H1 (cell line): ENCODE measurements at regions of chr1 and their contacts with region 1.

Region 1: DNA sequence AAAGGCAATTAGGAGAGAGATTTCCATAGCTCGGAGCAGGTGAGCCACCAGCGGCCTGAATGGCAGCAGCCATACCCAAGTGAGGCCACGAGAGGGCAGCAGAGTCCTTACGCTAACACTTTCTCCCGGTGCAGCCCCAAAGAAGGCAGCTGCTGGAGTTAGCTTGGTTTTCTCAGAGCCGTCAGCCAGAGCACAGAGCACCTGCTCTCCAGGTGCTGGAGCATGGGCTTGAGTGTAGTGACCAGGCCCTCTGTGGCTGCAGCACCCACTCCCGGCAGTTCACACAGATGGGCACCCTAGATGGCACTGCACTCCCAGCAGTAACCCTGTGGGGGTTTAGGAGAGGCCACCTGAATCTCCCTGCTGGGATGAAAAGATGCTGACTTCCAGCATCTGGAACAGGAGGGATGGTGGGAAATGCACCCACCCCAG is 45.8 kb downstream of the TMCC2 start:
- DNase-seq: peak; percentile 83 to 94
- H3K4me3 ChIP-seq: no peak overlapping the region
- H3K27ac ChIP-seq: 0 out of 2 replicates have a peak overlapping the region, but pooled peaks have one; percentile 0
- H3K4me1 ChIP-seq: peaks cover 5 to 19% (median 11%) of the 10 kb centered on the region in 4 experiments; a peak in 6 of 7 replicates
- H3K27me3 ChIP-seq: no peaks in the 10 kb centered on the region
- CTCF ChIP-seq: peak in 2 of 3 experiments; percentile 96 to 100; a peak in 3 of 4 replicates
- EP300 ChIP-seq: no peak
- POLR2A ChIP-seq: no peak
- RAD21 ChIP-seq: peak; percentile 99 to 100

Region 2: DNA sequence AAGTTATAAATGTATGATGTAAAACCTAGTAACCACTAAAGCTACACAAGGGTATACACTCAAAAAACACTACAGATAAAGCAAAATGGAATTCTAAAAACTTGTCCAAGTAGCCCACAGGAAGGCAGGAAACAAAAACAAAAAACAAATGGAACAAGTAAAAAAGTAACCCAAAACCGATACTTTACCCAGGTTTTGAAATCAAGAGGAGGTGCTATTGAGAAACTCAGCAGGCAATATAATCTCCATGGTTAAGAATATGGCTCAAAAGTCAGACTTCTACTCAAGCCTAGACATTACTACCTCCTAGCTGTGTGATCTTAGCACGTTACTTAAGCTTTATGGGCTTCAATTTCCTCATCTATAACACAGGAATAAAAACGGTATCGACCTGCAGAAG is 165.1 kb before region 1 on chr1:
- CTCF ChIA-PET with region 1: no interaction called
- POLR2A ChIA-PET with region 1: no interaction called
- DNase-seq: no peak
- H3K4me3 ChIP-seq: no peak overlapping the region
- H3K27ac ChIP-seq: no peak overlapping the region
- H3K4me1 ChIP-seq: no peaks in the 10 kb centered on the region; a peak in 1 of 7 replicates
- H3K27me3 ChIP-seq: no peaks in the 10 kb centered on the region
- CTCF ChIP-seq: no peak
- EP300 ChIP-seq: no peak
- POLR2A ChIP-seq: no peak
- RAD21 ChIP-seq: no peak

Region 3: DNA sequence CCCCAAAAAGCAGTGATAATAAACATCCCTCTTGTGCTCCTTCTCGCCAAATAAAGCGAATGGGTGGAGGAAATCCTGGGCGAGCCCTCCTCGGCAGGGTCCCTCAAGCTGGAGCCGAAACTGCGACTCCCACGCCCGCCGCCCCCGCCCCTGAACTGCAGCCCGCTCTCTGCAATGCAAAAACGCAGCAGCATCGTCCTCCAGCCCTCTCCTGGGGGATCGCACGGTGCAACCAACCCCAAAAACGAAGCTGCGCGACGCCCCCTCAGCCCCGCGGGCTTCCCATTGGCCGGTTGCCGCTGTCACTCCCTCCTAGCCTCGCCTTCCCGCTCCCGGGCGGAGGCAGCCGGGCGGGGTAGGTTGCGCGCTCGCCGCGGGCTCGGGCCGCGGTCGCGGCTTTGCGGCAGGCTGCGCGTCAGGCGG is 46.0 kb before region 1 on chr1 and contains the start of gene TMCC2:
- CTCF ChIA-PET with region 1: interaction called, 1,035 read pairs
- POLR2A ChIA-PET with region 1: interaction called, 3 read pairs
- DNase-seq: peak; percentile 73 to 97
- H3K4me3 ChIP-seq: peak within 1 kb of the TSS; percentile 59 to 85 (median 73)
- H3K27ac ChIP-seq: no peak within 1 kb of the TSS
- H3K4me1 ChIP-seq: peaks cover 13 to 18% (median 16%) of the 10 kb centered on the region in 4 experiments; a peak in 6 of 7 replicates
- H3K27me3 ChIP-seq: peaks cover 0 to 6% (median 4%) of the 10 kb centered on the region in 4 experiments; a peak in 5 of 7 replicates
- CTCF ChIP-seq: no peak
- EP300 ChIP-seq: no peak
- POLR2A ChIP-seq: peak in 1 of 2 experiments; percentile 45; a peak in 1 of 3 replicates
- RAD21 ChIP-seq: no peak
- total RNA-seq, gene TMCC2: 6.7 and 7.2 TPM in 2 replicates

Region 4: DNA sequence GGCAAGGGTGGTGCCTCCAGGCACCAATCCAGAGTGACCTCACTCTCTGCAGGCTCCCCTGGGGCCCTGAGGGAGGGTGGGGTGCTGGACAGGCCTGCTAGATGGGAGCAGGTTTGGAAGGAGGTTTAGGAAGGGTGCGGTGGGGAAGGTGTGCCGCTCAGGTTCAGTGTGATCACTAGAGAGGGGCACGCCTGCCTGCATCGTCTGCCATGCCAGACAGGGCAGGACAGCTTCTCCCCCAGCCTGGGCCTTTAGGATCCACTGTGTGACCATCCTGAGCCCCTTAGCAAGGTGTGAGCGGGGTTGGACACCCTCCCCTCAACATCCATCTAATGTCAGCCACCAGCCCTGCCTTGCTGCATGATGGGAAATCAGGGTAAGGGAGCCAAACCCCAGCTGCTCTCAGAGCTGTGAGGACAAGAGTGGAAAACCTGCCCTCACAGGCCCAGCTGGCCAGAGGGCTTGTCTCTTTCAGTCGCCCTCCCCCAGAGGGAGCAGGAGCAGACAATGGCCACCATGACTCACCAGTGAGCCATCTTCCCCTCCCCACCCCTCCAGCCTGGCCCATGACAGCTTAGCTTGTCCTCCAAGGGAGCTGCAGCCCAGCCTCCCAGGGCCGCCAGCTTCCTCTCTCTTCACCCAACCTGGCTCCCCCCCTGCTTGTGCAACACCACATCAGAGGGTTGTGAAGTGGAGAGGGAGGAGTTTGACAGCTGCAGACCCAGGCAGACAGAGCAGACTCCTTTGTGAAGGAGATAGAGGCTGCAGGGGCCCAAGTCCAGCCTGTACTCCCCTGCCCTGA is 11.0 kb after region 1 on chr1:
- CTCF ChIA-PET with region 1: interaction called, 48 read pairs
- POLR2A ChIA-PET with region 1: interaction called, 7 read pairs
- DNase-seq: peak; percentile 73 to 87
- H3K4me3 ChIP-seq: no peak overlapping the region
- H3K27ac ChIP-seq: peak overlapping the region; percentile 56; the same call in 1 of the 2 replicates
- H3K4me1 ChIP-seq: peaks cover 9 to 26% (median 18%) of the 10 kb centered on the region in 4 experiments
- H3K27me3 ChIP-seq: no peaks in the 10 kb centered on the region; a peak in 1 of 7 replicates
- CTCF ChIP-seq: no peak
- EP300 ChIP-seq: no peak
- POLR2A ChIP-seq: peak in 1 of 2 experiments; percentile 62; a peak in 2 of 3 replicates
- RAD21 ChIP-seq: no peak; a peak in 2 of 4 replicates

Region 5: DNA sequence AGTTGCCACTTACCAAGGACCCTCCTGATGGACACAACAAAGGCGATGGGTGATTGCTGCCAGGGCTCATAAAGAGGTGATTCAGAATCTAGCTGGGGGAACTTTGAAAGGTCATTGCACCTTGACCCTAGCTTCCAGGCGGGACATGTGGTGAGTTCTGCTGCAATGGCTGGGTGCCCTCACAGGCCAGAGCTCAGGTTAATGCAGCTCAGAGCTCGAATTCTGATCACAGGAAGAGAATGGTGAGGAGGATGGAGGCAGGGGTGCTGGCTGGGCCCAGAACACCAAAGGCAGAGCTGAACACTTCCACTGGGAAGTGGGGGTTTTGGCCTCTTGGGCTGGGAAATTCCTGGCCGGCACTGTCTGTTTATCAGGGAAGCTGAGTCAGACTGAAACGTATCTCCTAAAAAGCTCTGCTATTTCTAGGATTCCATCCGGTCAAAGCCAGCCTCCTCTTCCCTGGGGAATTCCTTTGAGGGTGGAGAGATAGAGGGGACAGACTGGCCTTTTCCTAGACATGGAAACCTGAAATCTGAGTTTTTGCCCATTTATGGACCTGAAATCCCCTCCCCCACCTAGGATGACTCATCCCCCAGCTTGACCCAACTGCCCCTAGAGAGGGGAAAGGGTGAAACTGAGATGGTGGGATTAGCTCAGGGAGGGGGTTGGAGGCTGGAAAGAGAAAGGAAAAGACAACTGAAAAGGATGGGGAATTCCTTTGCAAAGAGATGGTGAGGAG is 20.8 kb after region 1 on chr1:
- CTCF ChIA-PET with region 1: interaction called, 2,424 read pairs
- POLR2A ChIA-PET with region 1: interaction called, 25 read pairs
- DNase-seq: peak; percentile 56 to 85
- H3K4me3 ChIP-seq: peak overlapping the region in 1 of 4 experiments; percentile 30; a peak in 2 of 8 replicates
- H3K27ac ChIP-seq: peak overlapping the region; percentile 97
- H3K4me1 ChIP-seq: peaks cover 24 to 35% (median 28%) of the 10 kb centered on the region in 4 experiments
- H3K27me3 ChIP-seq: no peaks in the 10 kb centered on the region; a peak in 1 of 7 replicates
- CTCF ChIP-seq: no peak
- EP300 ChIP-seq: peak in 1 of 2 experiments; percentile 97; a peak in 2 of 3 replicates
- POLR2A ChIP-seq: peak in 1 of 2 experiments; percentile 66; a peak in 1 of 3 replicates
- RAD21 ChIP-seq: no peak

Region 6: DNA sequence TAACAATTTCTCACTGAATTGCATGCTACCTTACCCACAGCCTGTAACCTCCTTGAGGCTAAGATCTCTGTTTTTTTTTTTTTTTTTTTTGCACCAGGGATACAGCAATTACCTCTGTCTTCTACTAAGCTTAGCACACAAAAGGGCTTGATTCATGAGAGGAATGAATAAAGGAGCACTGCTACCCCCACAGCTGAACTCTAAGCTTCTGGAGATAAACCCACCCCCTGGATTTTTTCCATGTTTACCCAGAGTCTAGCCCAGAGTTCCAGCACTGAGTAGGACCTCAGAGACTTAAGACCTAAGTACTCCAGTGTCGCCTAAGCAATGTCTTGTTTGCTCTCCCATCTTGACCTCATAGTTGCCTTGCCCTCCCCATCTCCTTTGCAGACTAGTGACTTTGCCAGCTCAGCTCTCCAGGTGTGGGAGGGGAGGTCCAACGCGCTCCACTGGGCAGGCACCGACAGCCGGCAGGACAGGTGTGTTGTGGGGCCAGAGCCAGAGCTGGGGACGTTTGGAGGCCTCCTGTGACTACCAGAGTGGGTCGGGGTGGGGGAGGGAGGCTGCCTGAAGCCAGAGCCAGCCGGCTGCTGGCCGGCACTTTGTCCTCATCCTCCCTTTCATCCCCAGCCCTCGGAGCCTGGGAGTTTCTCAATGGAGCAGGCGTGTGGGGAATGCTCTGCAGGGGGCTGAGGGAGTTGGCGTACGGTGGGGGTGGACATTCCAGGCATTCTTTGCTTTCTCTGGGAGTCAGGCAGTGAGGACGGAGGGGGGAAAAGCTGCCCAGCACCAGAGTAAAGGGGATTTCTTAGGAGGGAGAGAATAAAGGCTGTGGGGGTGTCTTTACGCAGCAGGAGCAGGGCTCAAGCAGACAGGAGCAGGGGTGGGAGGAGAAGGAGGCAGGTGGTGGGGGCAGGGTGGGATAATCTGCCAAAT is 27.6 kb after region 1 on chr1:
- CTCF ChIA-PET with region 1: interaction called, 2,424 read pairs
- POLR2A ChIA-PET with region 1: interaction called, 28 read pairs
- DNase-seq: peak; percentile 94 to 99
- H3K4me3 ChIP-seq: peak overlapping the region in 3 of 4 experiments; percentile 27 to 43 (median 34); a peak in 3 of 8 replicates
- H3K27ac ChIP-seq: peak overlapping the region; percentile 98
- H3K4me1 ChIP-seq: peaks cover 21 to 38% (median 31%) of the 10 kb centered on the region in 4 experiments
- H3K27me3 ChIP-seq: no peaks in the 10 kb centered on the region; a peak in 1 of 7 replicates
- CTCF ChIP-seq: no peak
- EP300 ChIP-seq: peak; percentile 14 to 99
- POLR2A ChIP-seq: peak; percentile 61 to 91
- RAD21 ChIP-seq: peak; percentile 23 to 28; a peak in 2 of 4 replicates

Region 7: GRCh38 chr1:205313563-205314308 is 40.2 kb after region 1 on chr1:
- CTCF ChIA-PET with region 1: interaction called, 2,424 read pairs
- POLR2A ChIA-PET with region 1: interaction called, 17 read pairs
- DNase-seq: peak; percentile 79 to 88
- H3K4me3 ChIP-seq: peak overlapping the region in 3 of 4 experiments; percentile 6 to 46 (median 21); a peak in 5 of 8 replicates
- H3K27ac ChIP-seq: peak overlapping the region; percentile 91
- H3K4me1 ChIP-seq: peaks cover 29 to 53% (median 42%) of the 10 kb centered on the region in 4 experiments
- H3K27me3 ChIP-seq: no peaks in the 10 kb centered on the region
- CTCF ChIP-seq: no peak
- EP300 ChIP-seq: 0 out of 3 replicates have a peak, but pooled peaks of 1 of the 2 experiments have one; percentile 51
- POLR2A ChIP-seq: peak; percentile 75 to 83
- RAD21 ChIP-seq: 0 out of 4 replicates have a peak, but pooled peaks of 1 of the 2 experiments have one; percentile 8

Region 8: GRCh38 chr1:205466595-205467181 is 193.1 kb after region 1 on chr1:
- CTCF ChIA-PET with region 1: no interaction called
- POLR2A ChIA-PET with region 1: no interaction called
- DNase-seq: no peak
- H3K4me3 ChIP-seq: no peak overlapping the region
- H3K27ac ChIP-seq: no peak overlapping the region
- H3K4me1 ChIP-seq: peaks cover 0 to 5% (median 1%) of the 10 kb centered on the region in 4 experiments; a peak in 5 of 7 replicates
- H3K27me3 ChIP-seq: no peaks in the 10 kb centered on the region; a peak in 1 of 7 replicates
- CTCF ChIP-seq: no peak
- EP300 ChIP-seq: no peak
- POLR2A ChIP-seq: no peak
- RAD21 ChIP-seq: no peak